ENCODE measurements at regions of chr1 and their contacts with region 1.

Region 1: DNA sequence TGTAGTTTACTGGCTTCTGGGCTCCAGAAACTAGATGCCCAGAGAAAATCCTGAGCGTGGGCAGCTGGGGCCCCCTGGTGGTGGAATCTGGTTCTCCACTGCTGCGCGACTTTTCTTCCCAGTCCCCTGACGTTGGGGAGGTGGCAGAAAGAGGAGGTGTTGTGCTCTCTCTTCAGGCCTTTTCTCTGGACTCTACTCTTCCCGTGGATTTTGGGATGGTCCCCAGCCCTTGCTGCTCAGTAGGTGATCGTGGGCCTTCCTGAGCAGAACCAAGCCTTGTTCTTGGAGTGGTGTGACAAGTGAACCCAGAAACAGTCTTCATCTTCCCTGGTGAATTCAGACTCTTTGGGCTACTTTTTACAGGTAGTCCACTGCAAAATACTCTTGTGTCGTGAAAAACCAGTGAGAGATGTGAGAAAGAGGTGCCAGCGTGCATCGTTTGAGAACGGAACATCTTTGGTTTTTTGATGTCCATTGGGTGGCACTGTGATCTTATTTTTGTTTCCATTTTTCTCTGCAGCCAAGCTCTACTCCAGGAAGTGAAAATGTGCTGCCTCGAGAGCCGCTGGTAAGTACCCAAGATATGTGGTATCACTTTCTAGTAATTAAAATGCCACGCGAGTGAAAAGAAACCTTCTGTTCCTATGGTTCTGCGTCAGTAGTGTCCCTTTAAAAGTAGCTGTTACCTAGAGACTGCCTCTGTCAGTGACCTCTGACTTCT is 20.2 kb downstream of the PEX14 start:
- DNase-seq: no peak
- H3K4me3 ChIP-seq: peak overlapping the region; percentile 33
- H3K27me3 ChIP-seq: no peaks in the 10 kb centered on the region
- CTCF ChIP-seq: peak; percentile 95

Region 2: GRCh38 chr1:10324627-10325026 is 170.3 kb before region 1 on chr1:
- CTCF ChIA-PET with region 1: no interaction called
- POLR2A ChIA-PET with region 1: no interaction called
- DNase-seq: no peak
- H3K4me3 ChIP-seq: no peak overlapping the region
- H3K27me3 ChIP-seq: no peaks in the 10 kb centered on the region
- CTCF ChIP-seq: no peak

Region 3: DNA sequence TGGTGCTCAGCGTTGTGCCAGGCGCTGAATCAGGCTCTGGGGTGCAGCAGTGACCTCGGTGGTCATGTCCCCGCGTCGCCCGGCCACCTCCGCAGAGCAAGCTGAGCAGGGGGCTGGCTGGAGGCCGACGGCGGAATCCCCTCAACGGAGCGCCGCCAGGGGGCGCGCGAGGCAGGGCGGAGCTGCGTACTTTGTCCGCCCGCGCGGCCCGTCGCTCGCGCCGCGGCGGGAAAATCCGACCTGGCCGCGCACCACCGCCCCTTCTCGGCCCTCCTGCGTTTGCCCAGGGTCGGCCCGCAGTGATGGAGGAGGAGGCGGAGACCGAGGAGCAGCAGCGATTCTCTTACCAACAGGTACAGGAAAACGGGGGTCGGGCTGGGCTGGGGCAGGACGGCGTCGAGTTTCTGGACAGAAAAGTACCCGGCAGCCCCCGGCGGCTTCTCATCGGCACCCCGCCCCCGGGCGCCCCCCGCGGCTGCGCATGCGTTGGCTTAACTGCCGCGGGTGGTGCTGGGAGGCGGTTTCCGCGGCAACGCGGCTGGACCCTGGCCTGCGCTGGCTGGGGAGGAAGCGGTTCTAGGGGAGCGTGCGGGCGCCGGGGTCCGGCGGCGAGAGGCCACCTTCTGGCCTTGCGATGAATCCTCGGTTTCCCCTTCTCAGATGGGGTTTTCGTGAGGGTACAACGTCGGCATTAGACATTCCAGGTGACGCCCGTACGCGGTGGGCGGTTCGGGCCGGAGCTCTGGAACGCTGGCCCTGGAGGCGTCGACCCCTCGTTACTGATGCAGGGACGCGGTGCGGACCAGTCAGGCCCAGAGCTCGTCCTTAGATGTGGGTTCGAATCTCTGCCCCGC is 64.5 kb before region 1 on chr1 and contains the start of gene CENPS:
- CTCF ChIA-PET with region 1: interaction called, 180 read pairs
- POLR2A ChIA-PET with region 1: no interaction called
- DNase-seq: no peak
- H3K4me3 ChIP-seq: peak within 1 kb of the TSS; percentile 80
- H3K27me3 ChIP-seq: no peaks in the 10 kb centered on the region
- CTCF ChIP-seq: peak; percentile 76
- polyA plus RNA-seq, gene CENPS: 8.5 and 9.6 TPM in 2 replicates

Region 4: GRCh38 chr1:10484521-10484920 is 10.4 kb before region 1 on chr1:
- CTCF ChIA-PET with region 1: interaction called, 19 read pairs
- POLR2A ChIA-PET with region 1: no interaction called
- DNase-seq: no peak
- H3K4me3 ChIP-seq: no peak overlapping the region
- H3K27me3 ChIP-seq: no peaks in the 10 kb centered on the region
- CTCF ChIP-seq: no peak

Region 5: DNA sequence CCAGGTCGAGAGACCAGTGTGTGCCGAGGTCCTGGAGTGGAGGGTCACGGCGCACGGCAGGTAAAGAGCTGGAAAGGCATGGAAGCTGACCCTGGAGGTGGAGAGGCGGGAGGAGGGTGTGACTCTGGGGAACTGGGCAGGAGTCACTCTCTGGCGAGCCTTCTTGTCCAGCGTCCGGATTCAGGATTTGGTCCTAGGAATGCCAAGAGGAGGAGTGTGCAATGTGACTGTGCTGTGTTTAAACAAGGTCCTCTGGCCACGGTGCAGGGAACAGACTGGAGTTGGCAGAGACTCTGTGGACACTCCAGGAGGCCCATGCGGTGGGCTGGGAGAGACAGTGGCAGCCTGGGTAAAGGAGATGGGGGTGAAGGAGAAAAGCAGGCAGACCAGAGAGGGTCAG is 365.8 kb after region 1 on chr1:
- CTCF ChIA-PET with region 1: interaction called, 51 read pairs
- POLR2A ChIA-PET with region 1: no interaction called
- DNase-seq: no peak
- H3K4me3 ChIP-seq: no peak overlapping the region
- H3K27me3 ChIP-seq: peaks cover 19% of the 10 kb centered on the region
- CTCF ChIP-seq: no peak

Measured in BJ (cell line).